ENCODE measurements at regions of chr22 and their contacts with region 1.

Region 1: DNA sequence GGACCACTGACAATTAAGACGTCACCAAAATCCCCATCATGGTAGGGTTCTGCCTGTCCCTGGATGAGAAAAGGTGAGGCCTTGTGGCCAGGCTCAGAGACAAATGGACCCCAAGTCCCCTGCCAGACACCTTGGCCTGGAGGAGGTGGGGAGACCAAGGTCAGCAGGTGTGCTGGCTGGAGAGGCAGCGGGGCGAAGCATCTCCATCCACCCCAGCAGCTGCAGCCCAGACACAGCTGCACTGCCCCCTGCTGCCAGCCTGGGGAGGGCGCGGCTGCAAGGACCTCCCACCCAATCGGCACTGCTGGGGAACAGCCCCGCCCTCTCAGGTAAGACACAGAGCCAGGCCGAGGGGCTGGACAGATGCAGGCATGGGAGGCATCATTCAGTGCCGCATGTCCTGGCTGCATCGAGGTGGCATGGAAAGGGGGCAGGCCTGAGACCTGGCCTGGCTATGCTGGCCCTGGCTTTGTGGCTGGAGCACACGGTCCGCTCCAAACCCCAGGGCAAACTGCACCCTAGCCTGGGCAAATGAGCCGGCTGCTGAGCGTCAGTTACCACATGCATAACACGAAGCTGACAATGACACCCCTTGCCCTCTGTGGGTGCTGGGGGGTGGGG is 12.2 kb upstream of the MFNG start:
- DNase-seq: peak; percentile 80
- H3K4me3 Mint-ChIP-seq: no peak overlapping the region
- H3K27ac Mint-ChIP-seq: no peak overlapping the region
- H3K4me1 Mint-ChIP-seq: peaks cover 7% of the 10 kb centered on the region
- H3K27me3 Mint-ChIP-seq: peaks cover 3% of the 10 kb centered on the region

Region 2: GRCh38 chr22:37442537-37442936 is 55.9 kb before region 1 on chr22:
- CTCF ChIA-PET with region 1: no interaction called
- POLR2A ChIA-PET with region 1: no interaction called
- intact Hi-C with region 1: no loop called
- DNase-seq: peak; percentile 25
- H3K4me3 Mint-ChIP-seq: no peak overlapping the region
- H3K27ac Mint-ChIP-seq: no peak overlapping the region
- H3K4me1 Mint-ChIP-seq: peaks cover 16% of the 10 kb centered on the region
- H3K27me3 Mint-ChIP-seq: peaks cover 2% of the 10 kb centered on the region

Region 3: GRCh38 chr22:37486224-37486845 is 12.1 kb before region 1 on chr22 and contains the start of gene MFNG:
- CTCF ChIA-PET with region 1: interaction called, 22 read pairs
- POLR2A ChIA-PET with region 1: interaction called, 3 read pairs
- intact Hi-C with region 1: no loop called
- DNase-seq: peak; percentile 87
- H3K4me3 Mint-ChIP-seq: peak within 1 kb of the TSS; percentile 89
- H3K27ac Mint-ChIP-seq: peak within 1 kb of the TSS; percentile 92
- H3K4me1 Mint-ChIP-seq: peaks cover 60% of the 10 kb centered on the region
- H3K27me3 Mint-ChIP-seq: no peaks in the 10 kb centered on the region
- total RNA-seq, gene MFNG: 101 to 106 TPM

Region 4: GRCh38 chr22:37519268-37520195 is 21.1 kb after region 1 on chr22 and contains the start of gene CARD10:
- CTCF ChIA-PET with region 1: no interaction called
- POLR2A ChIA-PET with region 1: no interaction called
- intact Hi-C with region 1: no loop called
- DNase-seq: no peak
- H3K4me3 Mint-ChIP-seq: peak within 1 kb of the TSS; percentile 37
- H3K27ac Mint-ChIP-seq: no peak within 1 kb of the TSS
- H3K4me1 Mint-ChIP-seq: peaks cover 6% of the 10 kb centered on the region
- H3K27me3 Mint-ChIP-seq: peaks cover 33% of the 10 kb centered on the region
- total RNA-seq, gene CARD10: 0.12 TPM in 1 of 2 experiments, not detected in the other

Region 5: GRCh38 chr22:37616201-37617083 is 118.0 kb after region 1 on chr22:
- CTCF ChIA-PET with region 1: no interaction called
- POLR2A ChIA-PET with region 1: no interaction called
- intact Hi-C with region 1: no loop called
- DNase-seq: no peak
- H3K4me3 Mint-ChIP-seq: no peak overlapping the region
- H3K27ac Mint-ChIP-seq: no peak overlapping the region
- H3K4me1 Mint-ChIP-seq: peaks cover 2% of the 10 kb centered on the region
- H3K27me3 Mint-ChIP-seq: no peaks in the 10 kb centered on the region